Activated naive CD4-positive, alpha-beta T cell treated with anti-CD3 and anti-CD28 coated beads for 36 hours (primary cell): ENCODE measurements at regions of chr6 and their contacts with region 1.

Region 1: DNA sequence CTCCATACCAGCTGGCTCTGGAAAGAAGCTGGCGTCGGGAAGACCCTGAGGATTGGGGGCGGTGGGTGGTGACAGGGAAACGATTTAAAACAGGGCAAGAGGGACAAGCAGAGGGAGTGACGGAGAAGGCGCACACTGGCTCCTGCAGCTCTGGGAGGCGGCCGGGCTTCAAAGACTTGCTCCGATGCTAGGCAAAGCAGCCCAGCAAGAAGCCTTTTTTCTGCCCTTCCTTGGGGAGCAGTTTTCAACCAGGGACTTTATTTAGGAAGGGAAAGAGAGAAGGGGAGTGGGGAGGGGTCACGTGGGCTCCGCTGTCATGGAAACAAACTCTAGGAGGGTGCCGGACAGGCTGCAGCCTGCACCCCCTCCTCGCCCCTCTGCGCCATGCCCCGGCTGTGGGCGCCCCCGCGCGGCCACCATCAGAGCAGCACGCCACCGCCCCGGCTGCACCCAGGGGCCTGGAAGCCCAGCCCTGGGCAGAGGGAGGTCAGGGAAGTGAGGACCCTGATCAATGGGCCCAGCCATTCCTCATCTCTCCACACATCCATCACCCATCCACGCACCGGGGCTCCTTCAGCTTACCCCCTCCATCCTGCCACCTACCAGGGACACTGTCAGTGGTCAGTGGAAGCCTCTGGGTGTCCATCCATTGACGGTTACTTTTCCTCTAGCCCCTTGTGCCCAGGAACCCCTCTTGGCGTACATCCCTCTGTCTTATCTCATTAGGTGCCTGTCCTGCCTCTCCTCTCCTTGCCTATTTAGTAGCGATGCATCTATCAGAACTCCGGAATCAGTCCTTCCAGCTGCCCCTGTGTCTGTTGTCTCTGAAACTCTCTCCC is 66.6 kb upstream of the CCDC167 start:
- DNase-seq: peak; percentile 72
- H3K4me3 Mint-ChIP-seq: no peak overlapping the region
- H3K27ac Mint-ChIP-seq: no peak overlapping the region
- H3K4me1 Mint-ChIP-seq: peaks cover 2% of the 10 kb centered on the region
- H3K27me3 Mint-ChIP-seq: no peaks in the 10 kb centered on the region

Region 2: GRCh38 chr6:37298958-37299357 is 267.4 kb before region 1 on chr6:
- CTCF ChIA-PET with region 1: no interaction called
- intact Hi-C with region 1: no loop called
- DNase-seq: no peak
- H3K4me3 Mint-ChIP-seq: no peak overlapping the region
- H3K27ac Mint-ChIP-seq: no peak overlapping the region
- H3K4me1 Mint-ChIP-seq: no peaks in the 10 kb centered on the region
- H3K27me3 Mint-ChIP-seq: no peaks in the 10 kb centered on the region

Region 3: GRCh38 chr6:37324131-37325033 is 241.9 kb before region 1 on chr6:
- CTCF ChIA-PET with region 1: interaction called, 7 read pairs
- intact Hi-C with region 1: loop called (anchors 2 kb)
- DNase-seq: peak; percentile 66
- H3K4me3 Mint-ChIP-seq: no peak overlapping the region
- H3K27ac Mint-ChIP-seq: no peak overlapping the region
- H3K4me1 Mint-ChIP-seq: peaks cover 20% of the 10 kb centered on the region
- H3K27me3 Mint-ChIP-seq: no peaks in the 10 kb centered on the region

Region 4: DNA sequence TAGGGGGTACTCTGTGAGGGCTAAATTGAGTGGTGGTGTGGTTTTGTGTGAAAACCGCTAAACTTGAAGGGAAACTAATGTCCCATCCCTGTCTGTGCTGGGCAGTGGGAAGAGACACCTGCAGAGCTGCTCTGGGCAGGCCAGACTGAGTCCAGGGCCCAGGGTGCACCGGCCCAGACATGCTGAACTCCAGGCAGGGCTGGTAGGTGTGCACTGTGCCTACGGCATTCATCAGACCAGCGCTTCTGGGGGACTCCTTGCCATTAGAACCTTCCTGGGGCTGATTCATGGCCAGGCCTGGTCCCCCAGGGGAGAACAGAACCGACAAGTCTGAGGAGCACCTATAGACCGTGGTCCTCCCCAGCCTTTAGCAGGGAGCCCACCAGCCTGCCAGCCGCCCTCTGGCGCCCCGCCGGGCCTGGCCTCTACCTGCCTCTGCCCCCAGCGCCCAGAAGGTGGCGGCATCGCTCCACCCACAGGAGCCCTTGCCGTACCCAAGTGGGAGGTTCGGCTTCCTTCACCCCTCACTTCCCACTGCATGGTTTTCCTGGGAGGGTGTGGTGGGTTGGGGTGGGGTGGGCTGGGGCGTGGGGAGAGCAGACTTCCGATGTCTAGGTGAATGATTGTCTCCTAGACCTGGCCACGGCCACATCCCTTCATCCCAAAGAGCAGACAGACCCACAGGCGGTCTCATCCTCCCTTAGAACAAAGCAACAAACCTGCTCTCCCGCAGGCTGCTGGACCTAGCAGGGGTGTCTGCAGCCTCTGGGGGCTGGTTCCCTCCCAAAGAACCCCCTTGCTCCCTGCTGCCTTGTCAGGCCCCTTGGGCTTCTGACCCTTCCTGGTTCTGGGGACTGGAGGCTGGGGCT is 82.2 kb before region 1 on chr6:
- CTCF ChIA-PET with region 1: interaction called, 54 read pairs
- intact Hi-C with region 1: loop called (anchors 1 kb)
- DNase-seq: peak; percentile 79
- H3K4me3 Mint-ChIP-seq: no peak overlapping the region
- H3K27ac Mint-ChIP-seq: no peak overlapping the region
- H3K4me1 Mint-ChIP-seq: peaks cover 14% of the 10 kb centered on the region
- H3K27me3 Mint-ChIP-seq: no peaks in the 10 kb centered on the region

Region 5: DNA sequence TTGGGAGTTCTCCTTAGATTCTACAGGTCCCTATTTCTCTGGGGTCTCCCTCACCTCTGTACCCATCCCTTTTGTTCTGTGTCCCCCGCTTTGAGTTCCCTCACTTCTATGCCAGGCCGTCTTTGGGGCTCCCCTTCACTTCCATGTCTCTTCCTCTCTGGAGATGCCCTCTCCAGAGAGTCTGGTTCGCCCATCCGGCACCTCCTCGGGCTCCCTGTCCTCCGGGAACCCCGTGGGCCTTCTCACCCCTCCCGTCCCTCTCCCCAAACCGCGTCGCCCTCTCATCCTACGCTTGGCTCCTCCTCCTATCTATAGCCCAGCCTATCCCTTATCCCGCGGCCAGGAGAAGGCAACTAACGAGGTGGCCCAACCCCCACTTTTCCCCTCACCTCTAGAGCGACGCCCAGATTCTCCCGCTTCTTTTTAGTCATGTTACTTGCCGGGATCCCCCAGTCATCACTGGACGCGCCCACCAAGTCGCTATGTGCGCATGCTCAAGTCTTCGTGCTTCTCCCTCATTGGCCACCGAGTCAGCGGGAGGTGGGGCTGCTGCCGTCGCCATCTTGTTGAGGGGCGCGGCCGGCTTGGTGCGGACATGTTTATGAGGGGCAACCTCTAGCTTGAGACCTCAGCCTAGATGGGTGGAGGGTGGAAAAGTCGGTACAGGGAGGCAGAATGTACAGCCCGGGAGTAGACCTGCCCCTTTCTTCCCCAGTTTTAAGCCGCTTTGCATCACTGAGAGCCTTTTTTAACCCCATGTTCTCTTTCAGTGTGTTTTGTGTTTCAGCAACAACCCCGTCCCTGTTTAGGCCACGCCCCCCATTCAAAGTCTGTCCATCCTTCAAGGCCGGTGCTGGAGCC is 66.7 kb before region 1 on chr6 and contains the start of gene CCDC167:
- CTCF ChIA-PET with region 1: interaction called, 18 read pairs
- intact Hi-C with region 1: no loop called
- DNase-seq: peak; percentile 99
- H3K4me3 Mint-ChIP-seq: peak within 1 kb of the TSS; percentile 98
- H3K27ac Mint-ChIP-seq: peak within 1 kb of the TSS; percentile 97
- H3K4me1 Mint-ChIP-seq: peaks cover 90% of the 10 kb centered on the region
- H3K27me3 Mint-ChIP-seq: no peaks in the 10 kb centered on the region
- total RNA-seq, gene CCDC167: 53.4 to 57.1 TPM

Region 6: GRCh38 chr6:37538107-37538506 is 28.2 kb before region 1 on chr6:
- CTCF ChIA-PET with region 1: interaction called, 44 read pairs
- intact Hi-C with region 1: loop called (anchors 2 kb)
- DNase-seq: no peak
- H3K4me3 Mint-ChIP-seq: no peak overlapping the region
- H3K27ac Mint-ChIP-seq: no peak overlapping the region
- H3K4me1 Mint-ChIP-seq: peaks cover 8% of the 10 kb centered on the region
- H3K27me3 Mint-ChIP-seq: no peaks in the 10 kb centered on the region

Region 7: DNA sequence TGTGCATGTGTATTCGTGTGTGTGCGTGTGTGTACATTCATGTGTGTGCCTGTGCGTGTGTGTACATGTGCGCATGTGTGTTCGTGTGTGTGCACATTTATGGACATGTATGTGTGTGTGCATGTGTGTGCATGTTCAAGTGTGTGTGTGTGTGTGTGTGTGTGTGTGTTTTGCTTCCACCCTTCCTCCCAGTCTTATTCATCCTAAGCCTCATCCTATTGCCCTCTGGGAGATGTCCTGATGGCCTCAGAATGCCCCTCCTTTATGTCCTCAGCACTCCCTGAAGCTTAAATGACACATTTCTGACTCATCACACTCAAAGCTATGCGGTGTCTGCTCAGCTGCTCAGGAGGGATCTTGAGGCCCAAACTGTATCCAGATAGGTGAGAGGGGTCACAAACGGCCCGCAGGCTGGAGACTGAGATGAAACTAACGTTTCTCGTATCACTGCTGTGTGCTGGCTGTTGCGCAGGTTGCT is 10.0 kb after region 1 on chr6:
- CTCF ChIA-PET with region 1: interaction called, 20 read pairs
- intact Hi-C with region 1: no loop called
- DNase-seq: no peak
- H3K4me3 Mint-ChIP-seq: no peak overlapping the region
- H3K27ac Mint-ChIP-seq: no peak overlapping the region
- H3K4me1 Mint-ChIP-seq: no peaks in the 10 kb centered on the region
- H3K27me3 Mint-ChIP-seq: no peaks in the 10 kb centered on the region

Region 8: GRCh38 chr6:38508894-38509293 is 942.6 kb after region 1 on chr6:
- CTCF ChIA-PET with region 1: no interaction called
- intact Hi-C with region 1: no loop called
- DNase-seq: no peak
- H3K4me3 Mint-ChIP-seq: no peak overlapping the region
- H3K27ac Mint-ChIP-seq: no peak overlapping the region
- H3K4me1 Mint-ChIP-seq: peaks cover 2% of the 10 kb centered on the region
- H3K27me3 Mint-ChIP-seq: no peaks in the 10 kb centered on the region